ENCODE measurements at regions of chr6 and their contacts with region 1.

Region 1: GRCh38 chr6:150417899-150418826 is 49.4 kb downstream of the IYD start:
- DNase-seq: peak; percentile 77
- H3K4me3 Mint-ChIP-seq: peak overlapping the region; percentile 74
- H3K27ac Mint-ChIP-seq: peak overlapping the region; percentile 31
- H3K4me1 Mint-ChIP-seq: peaks cover 13% of the 10 kb centered on the region
- H3K27me3 Mint-ChIP-seq: peaks cover 31% of the 10 kb centered on the region

Region 2: GRCh38 chr6:150600301-150601017 is 182.3 kb after region 1 on chr6:
- intact Hi-C with region 1: loop called (anchors 2 kb)
- DNase-seq: peak; percentile 83
- H3K4me3 Mint-ChIP-seq: peak overlapping the region; percentile 88
- H3K27ac Mint-ChIP-seq: peak overlapping the region; percentile 43
- H3K4me1 Mint-ChIP-seq: peaks cover 15% of the 10 kb centered on the region
- H3K27me3 Mint-ChIP-seq: peaks cover 52% of the 10 kb centered on the region

Region 3: DNA sequence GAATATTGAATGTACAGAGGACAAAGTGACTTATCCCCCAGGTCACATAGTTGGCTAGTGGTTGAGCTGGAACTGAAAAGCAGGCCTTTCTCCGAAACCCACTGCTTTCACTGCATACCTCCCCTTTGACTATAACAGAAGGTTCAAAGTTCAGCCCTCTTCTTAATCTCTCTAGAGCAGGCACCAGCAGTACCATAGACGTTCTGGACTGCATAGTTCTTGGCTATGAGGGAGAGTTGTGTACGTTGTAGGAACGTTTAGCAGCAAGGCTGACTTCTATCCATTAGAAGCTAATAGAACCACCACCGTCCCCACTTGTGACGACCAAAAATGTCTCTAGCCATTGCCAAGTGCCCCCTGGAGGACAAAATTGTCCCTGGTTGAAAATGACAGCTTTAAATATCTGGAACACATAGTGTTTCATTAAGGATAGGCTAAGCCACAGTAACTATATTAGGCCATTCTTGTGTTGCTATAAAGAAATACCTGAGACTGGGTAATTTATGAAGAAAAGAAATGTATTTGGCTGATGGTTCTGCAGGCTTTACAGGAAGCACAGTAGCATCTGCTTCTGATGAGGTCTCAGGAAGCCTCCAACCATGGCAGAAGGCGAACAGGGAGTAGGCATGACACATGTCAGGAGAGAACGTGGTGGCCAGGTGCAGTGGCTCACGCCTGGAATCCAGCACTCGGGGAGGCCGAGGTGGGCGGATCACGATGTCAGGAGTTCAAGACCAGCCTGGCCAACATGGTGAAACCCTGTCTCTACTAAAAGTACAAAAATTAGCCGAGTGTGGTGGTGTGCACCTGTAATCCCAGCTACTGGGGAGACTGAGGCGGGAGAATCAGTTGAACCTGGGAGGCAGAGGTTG is 323.7 kb after region 1 on chr6:
- intact Hi-C with region 1: loop called (anchors 1 kb)
- DNase-seq: no peak
- H3K4me3 Mint-ChIP-seq: no peak overlapping the region
- H3K27ac Mint-ChIP-seq: no peak overlapping the region
- H3K4me1 Mint-ChIP-seq: no peaks in the 10 kb centered on the region
- H3K27me3 Mint-ChIP-seq: peaks cover 14% of the 10 kb centered on the region